IMR-90 (cell line): ENCODE measurements at regions of chr10 and their contacts with region 1.

Region 1: GRCh38 chr10:122551450-122551849 is 9.1 kb upstream of the DMBT1 start:
- DNase-seq: no peak
- ATAC-seq: no peak
- H3K4me3 ChIP-seq: no peak overlapping the region
- H3K27ac ChIP-seq: no peak overlapping the region
- H3K4me1 ChIP-seq: no peaks in the 10 kb centered on the region
- H3K27me3 ChIP-seq: peaks cover 4% of the 10 kb centered on the region; the same call in 1 of the 2 replicates
- CTCF ChIP-seq: no peak
- POLR2A ChIP-seq: no peak
- RAD21 ChIP-seq: no peak

Region 2: GRCh38 chr10:122419876-122420623 is 131.4 kb before region 1 on chr10:
- CTCF ChIA-PET with region 1: no interaction called
- POLR2A ChIA-PET with region 1: no interaction called
- dilution Hi-C with region 1: no loop called
- in situ Hi-C with region 1: no loop called
- intact Hi-C with region 1: no loop called
- DNase-seq: peak; percentile 85
- ATAC-seq: peak; percentile 66
- H3K4me3 ChIP-seq: no peak overlapping the region
- H3K27ac ChIP-seq: no peak overlapping the region
- H3K4me1 ChIP-seq: peaks cover 4% of the 10 kb centered on the region
- H3K27me3 ChIP-seq: no peaks in the 10 kb centered on the region
- CTCF ChIP-seq: no peak
- POLR2A ChIP-seq: no peak
- RAD21 ChIP-seq: no peak

Region 3: GRCh38 chr10:122461367-122461728 is 90.1 kb before region 1 on chr10 and contains the start of gene HTRA1:
- CTCF ChIA-PET with region 1: no interaction called
- POLR2A ChIA-PET with region 1: no interaction called
- dilution Hi-C with region 1: no loop called
- in situ Hi-C with region 1: no loop called
- intact Hi-C with region 1: loop called (anchors 5 kb)
- DNase-seq: peak; percentile 61
- ATAC-seq: peak; percentile 82
- H3K4me3 ChIP-seq: peak within 1 kb of the TSS; percentile 52
- H3K27ac ChIP-seq: peak within 1 kb of the TSS; percentile 34
- H3K4me1 ChIP-seq: peaks cover 12% of the 10 kb centered on the region
- H3K27me3 ChIP-seq: peaks cover 2% of the 10 kb centered on the region
- CTCF ChIP-seq: no peak
- POLR2A ChIP-seq: no peak
- RAD21 ChIP-seq: no peak
- total RNA-seq, gene HTRA1: 23.1 and 28.5 TPM in 2 replicates

Region 4: GRCh38 chr10:122515588-122516231 is 35.7 kb before region 1 on chr10:
- CTCF ChIA-PET with region 1: no interaction called
- POLR2A ChIA-PET with region 1: interaction called, 10 read pairs
- dilution Hi-C with region 1: no loop called
- in situ Hi-C with region 1: no loop called
- intact Hi-C with region 1: no loop called
- DNase-seq: peak; percentile 35
- ATAC-seq: no peak
- H3K4me3 ChIP-seq: no peak overlapping the region
- H3K27ac ChIP-seq: no peak overlapping the region
- H3K4me1 ChIP-seq: no peaks in the 10 kb centered on the region
- H3K27me3 ChIP-seq: no peaks in the 10 kb centered on the region
- CTCF ChIP-seq: no peak
- POLR2A ChIP-seq: no peak
- RAD21 ChIP-seq: no peak

Region 5: DNA sequence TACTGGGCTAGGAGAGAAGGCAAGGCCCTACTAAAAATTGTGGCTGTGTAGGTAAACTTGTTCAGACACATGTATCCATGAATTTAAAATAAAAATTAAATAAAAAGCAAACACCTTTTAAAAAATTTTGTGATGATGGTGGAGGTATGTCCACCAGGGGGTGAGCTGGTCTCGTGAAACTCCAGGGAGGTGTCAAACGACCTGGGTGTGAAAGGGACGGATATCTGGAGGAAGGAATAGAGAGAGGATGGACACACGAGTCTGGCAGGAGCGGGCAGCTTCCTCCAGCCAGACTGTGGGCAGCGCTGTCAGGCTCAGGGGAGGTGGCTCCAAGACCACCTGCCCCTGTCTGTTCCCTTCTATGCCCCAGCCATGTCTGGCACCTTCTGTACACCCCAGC is 25.7 kb before region 1 on chr10:
- CTCF ChIA-PET with region 1: no interaction called
- POLR2A ChIA-PET with region 1: no interaction called
- dilution Hi-C with region 1: no loop called
- in situ Hi-C with region 1: no loop called
- intact Hi-C with region 1: no loop called
- DNase-seq: no peak
- ATAC-seq: no peak
- H3K4me3 ChIP-seq: no peak overlapping the region
- H3K27ac ChIP-seq: no peak overlapping the region
- H3K4me1 ChIP-seq: 0 out of 2 replicates have a peak, but pooled peaks cover 2% of the 10 kb centered on the region
- H3K27me3 ChIP-seq: peaks cover 11% of the 10 kb centered on the region
- CTCF ChIP-seq: 0 out of 2 replicates have a peak, but pooled peaks have one; percentile 12
- POLR2A ChIP-seq: no peak
- RAD21 ChIP-seq: no peak